ENCODE measurements at regions of chr3 and their contacts with region 1.

Region 1: DNA sequence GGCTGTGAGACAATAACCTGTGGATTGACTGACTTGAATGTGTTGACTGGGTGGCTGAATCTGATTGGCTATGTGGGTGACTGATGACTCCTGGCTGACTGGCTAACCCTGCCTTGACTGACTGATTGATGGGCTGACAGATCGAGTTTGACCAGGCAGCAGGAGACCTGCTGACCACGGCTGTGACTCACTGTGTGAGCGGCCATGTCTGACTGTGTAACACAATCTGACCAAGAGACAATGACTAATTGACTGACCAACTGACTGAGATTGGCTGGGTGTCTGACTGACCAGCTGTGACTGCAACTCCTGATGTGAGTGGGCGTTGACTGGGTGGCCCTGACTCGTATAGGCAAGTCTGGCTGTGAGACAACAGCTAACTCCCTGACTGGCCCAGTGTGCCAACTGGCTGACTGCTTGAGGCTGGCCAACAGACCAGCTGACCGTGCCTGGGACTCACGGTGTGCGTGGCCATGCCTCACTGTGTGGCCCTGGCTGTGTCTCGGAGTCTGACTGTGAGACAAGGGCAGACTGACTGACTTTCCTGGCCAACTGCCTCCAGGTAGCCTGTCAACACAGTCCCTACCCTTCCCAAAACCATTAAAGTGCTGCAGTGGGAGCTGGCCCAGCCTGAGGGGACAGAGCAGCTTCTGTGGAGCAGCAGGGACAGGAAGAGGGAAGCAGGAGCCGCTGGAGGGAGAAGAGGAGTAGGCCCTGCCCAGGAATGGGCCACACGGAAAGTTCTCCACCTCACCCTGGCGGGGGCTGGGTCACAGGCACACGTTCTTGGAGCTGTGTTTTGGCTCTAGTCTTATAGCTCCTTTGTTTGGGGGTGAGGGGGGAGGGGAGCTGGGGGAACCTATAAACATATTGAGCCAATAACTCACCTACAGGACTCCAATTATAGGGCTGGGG is 508.9 kb downstream of the SHQ1 start:
- DNase-seq: no peak
- ATAC-seq: no peak
- H3K4me3 Mint-ChIP-seq: no peak overlapping the region
- H3K27ac Mint-ChIP-seq: no peak overlapping the region
- H3K4me1 Mint-ChIP-seq: peaks cover 34% of the 10 kb centered on the region
- H3K27me3 Mint-ChIP-seq: no peaks in the 10 kb centered on the region

Region 2: GRCh38 chr3:71955240-71956068 is 383.9 kb before region 1 on chr3:
- CTCF ChIA-PET with region 1: no interaction called
- POLR2A ChIA-PET with region 1: no interaction called
- intact Hi-C with region 1: loop called in 1 of 2 experiments (anchors 10 kb)
- DNase-seq: peak; percentile 72
- ATAC-seq: peak; percentile 80
- H3K4me3 Mint-ChIP-seq: no peak overlapping the region
- H3K27ac Mint-ChIP-seq: peak overlapping the region; percentile 55
- H3K4me1 Mint-ChIP-seq: peaks cover 35% of the 10 kb centered on the region
- H3K27me3 Mint-ChIP-seq: peaks cover 2% of the 10 kb centered on the region

Region 3: DNA sequence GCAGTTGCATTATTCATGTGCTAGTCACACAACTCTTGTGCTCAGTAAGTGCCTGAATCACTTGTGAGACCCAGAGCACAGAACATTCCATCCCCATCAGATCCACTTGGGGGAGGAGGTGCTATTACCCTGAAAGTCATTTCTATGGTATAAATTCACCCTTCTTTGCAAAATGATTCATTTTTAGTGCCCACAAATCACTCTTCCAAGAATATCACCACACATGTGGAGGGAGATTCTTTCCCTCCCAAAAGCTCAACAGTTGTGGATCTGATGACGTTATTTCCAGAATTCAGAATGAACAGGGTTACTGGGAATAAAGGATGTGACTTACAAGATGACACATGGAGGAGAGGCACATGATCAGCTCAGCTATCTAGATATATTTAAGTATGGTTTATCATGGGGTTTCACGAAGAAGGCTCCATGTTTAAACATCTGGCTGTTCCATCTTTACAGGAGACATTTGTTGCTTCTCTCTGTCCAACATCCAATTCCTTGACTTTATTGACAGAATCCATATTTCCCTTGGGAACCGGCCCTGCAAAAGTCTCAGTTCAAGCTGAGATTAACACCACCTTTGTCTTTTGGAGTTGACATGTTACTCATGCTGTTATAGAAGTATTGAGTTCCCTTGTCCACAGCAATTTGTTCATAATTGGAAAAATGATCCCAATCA is 340.2 kb before region 1 on chr3:
- CTCF ChIA-PET with region 1: no interaction called
- POLR2A ChIA-PET with region 1: no interaction called
- intact Hi-C with region 1: loop called in 1 of 2 experiments (anchors 1 kb)
- DNase-seq: peak; percentile 47
- ATAC-seq: peak; percentile 90
- H3K4me3 Mint-ChIP-seq: no peak overlapping the region
- H3K27ac Mint-ChIP-seq: peak overlapping the region; percentile 77
- H3K4me1 Mint-ChIP-seq: peaks cover 34% of the 10 kb centered on the region
- H3K27me3 Mint-ChIP-seq: peaks cover 5% of the 10 kb centered on the region

Region 4: GRCh38 chr3:72255791-72256559 is 83.4 kb before region 1 on chr3:
- CTCF ChIA-PET with region 1: no interaction called
- POLR2A ChIA-PET with region 1: no interaction called
- intact Hi-C with region 1: loop called in 1 of 2 experiments (anchors 2 kb)
- DNase-seq: peak; percentile 54
- ATAC-seq: no peak
- H3K4me3 Mint-ChIP-seq: no peak overlapping the region
- H3K27ac Mint-ChIP-seq: no peak overlapping the region
- H3K4me1 Mint-ChIP-seq: peaks cover 43% of the 10 kb centered on the region
- H3K27me3 Mint-ChIP-seq: peaks cover 2% of the 10 kb centered on the region

Region 5: DNA sequence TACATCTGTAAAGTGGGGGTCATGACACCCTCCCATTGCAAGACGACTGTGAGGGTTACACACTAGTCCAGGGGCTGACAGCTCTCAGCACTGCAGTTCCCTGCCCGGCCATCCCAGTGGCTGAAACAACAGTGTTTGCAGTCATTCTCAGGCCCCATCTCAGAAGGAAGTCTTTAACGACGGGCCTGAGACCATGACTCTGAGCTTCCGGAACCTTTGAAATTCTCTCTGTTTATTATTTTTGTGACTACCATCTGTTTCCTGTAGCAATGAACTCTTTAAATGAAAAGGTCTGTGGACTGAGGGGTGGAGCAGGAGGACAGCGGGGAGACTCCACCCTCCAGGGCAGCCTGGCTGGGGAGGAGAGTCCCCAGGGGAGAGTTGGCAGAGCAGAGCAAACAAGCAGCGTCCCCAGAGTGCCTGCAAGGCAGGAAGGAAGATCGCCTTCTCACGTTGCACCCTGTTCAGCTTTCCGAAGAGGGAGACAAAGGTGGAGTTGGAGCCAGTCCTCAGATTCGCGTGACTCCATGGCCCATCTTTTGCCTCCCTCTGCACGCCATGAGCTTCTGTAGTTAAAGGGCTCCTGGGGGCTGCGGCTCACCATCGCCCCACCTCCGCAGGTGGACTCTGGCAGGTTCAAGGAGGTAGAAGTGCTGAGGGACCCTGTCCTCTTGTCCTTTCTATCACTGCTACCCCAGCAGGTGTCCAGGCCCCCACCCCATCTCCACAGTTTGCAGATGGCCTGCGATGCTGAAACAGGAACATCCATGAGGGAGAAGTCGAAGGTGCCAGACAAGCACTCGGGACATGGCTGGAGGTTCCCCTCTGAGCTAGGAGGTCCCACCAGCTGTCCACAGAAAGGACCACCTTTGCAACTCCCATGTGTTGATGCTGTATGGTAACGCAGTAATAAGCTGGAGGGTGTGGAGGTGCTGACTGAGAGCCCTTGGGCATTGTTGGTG is 28.7 kb before region 1 on chr3:
- CTCF ChIA-PET with region 1: no interaction called
- POLR2A ChIA-PET with region 1: no interaction called
- intact Hi-C with region 1: no loop called
- DNase-seq: peak; percentile 28
- ATAC-seq: peak; percentile 77
- H3K4me3 Mint-ChIP-seq: no peak overlapping the region
- H3K27ac Mint-ChIP-seq: peak overlapping the region; percentile 20
- H3K4me1 Mint-ChIP-seq: peaks cover 19% of the 10 kb centered on the region
- H3K27me3 Mint-ChIP-seq: no peaks in the 10 kb centered on the region

Region 6: DNA sequence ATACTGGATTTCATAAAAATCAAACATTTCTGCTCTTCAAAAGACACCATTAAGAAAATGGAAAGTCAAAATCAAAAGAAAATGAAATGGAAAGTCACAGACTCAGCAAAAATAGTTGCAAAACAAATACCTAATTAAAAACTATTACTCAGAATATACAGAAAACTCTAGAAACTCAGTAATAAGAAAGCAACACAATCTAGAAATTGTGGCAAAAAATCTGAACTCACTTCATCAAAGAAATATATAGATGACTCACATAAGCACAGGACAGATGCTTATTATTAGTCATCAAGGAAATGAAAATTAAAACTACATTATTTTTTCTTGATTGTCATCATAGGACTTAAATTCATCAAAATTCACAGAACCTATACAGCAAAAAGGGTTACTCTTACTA is 78.9 kb after region 1 on chr3:
- CTCF ChIA-PET with region 1: no interaction called
- POLR2A ChIA-PET with region 1: no interaction called
- intact Hi-C with region 1: loop called in 1 of 2 experiments (anchors 2 kb)
- DNase-seq: no peak
- ATAC-seq: peak; percentile 73
- H3K4me3 Mint-ChIP-seq: no peak overlapping the region
- H3K27ac Mint-ChIP-seq: no peak overlapping the region
- H3K4me1 Mint-ChIP-seq: peaks cover 72% of the 10 kb centered on the region
- H3K27me3 Mint-ChIP-seq: no peaks in the 10 kb centered on the region

Region 7: DNA sequence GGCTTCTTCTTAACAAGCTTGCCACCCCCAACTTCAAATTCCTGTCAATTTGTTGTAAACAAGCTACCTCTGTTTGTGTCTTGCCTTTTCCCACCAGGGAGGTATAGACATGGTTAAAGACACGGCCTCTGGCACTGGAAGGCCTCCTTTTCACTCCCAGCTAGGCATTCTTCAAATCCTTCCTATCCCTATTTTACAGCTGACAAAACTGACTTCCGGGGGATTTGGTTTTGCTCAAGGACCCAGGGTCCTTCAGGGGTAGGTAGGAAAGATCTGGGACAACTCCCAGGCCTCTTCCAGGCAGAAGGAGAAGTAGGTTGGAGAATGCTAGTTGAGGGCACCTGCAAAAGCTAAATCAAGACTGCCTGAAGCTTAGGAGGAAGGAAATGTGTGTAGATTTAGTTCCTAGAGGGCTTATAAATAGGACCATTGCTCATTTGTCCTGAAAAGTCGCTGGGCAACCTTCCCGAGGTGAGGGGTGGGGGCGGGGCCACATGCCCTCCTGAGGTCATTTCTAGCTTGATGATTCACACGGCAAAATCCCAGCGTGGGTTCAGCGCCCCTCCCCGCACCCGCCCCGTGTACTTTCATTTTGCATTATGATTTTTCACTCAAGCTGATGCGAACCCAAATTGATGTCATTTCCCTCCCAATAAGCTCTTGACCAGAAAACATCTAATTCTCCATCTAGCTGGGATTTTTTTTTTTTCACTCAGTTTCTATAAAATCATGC is 143.4 kb after region 1 on chr3:
- CTCF ChIA-PET with region 1: no interaction called
- POLR2A ChIA-PET with region 1: no interaction called
- intact Hi-C with region 1: loop called (anchors 1 to 5 kb)
- DNase-seq: peak; percentile 94
- ATAC-seq: peak; percentile 46
- H3K4me3 Mint-ChIP-seq: peak overlapping the region; percentile 51
- H3K27ac Mint-ChIP-seq: peak overlapping the region; percentile 90
- H3K4me1 Mint-ChIP-seq: peaks cover 73% of the 10 kb centered on the region
- H3K27me3 Mint-ChIP-seq: no peaks in the 10 kb centered on the region

Region 8: GRCh38 chr3:72629191-72629631 is 289.8 kb after region 1 on chr3:
- CTCF ChIA-PET with region 1: no interaction called
- POLR2A ChIA-PET with region 1: no interaction called
- intact Hi-C with region 1: loop called (anchors 1 to 2 kb)
- DNase-seq: no peak
- ATAC-seq: peak; percentile 67
- H3K4me3 Mint-ChIP-seq: no peak overlapping the region
- H3K27ac Mint-ChIP-seq: peak overlapping the region; percentile 79
- H3K4me1 Mint-ChIP-seq: peaks cover 60% of the 10 kb centered on the region
- H3K27me3 Mint-ChIP-seq: no peaks in the 10 kb centered on the region